CD4-positive, alpha-beta T cell (primary cell): ENCODE measurements at regions of chr1 and their contacts with region 1.

Region 1: GRCh38 chr1:25771246-25772114 is 28.5 kb upstream of the SELENON start:
- DNase-seq: peak; percentile 15 to 78 (median 58)
- ATAC-seq: peak; percentile 17
- H3K4me3 ChIP-seq: no peak overlapping the region
- H3K4me3 Mint-ChIP-seq: peak overlapping the region; percentile 77
- H3K27ac ChIP-seq: peak overlapping the region; percentile 12 to 72
- H3K27ac Mint-ChIP-seq: peak overlapping the region; percentile 98
- H3K4me1 ChIP-seq: peaks cover 82% of the 10 kb centered on the region
- H3K4me1 Mint-ChIP-seq: peaks cover 85% of the 10 kb centered on the region
- H3K27me3 ChIP-seq: no peaks in the 10 kb centered on the region
- H3K27me3 Mint-ChIP-seq: no peaks in the 10 kb centered on the region
- CTCF ChIP-seq: no peak

Region 2: DNA sequence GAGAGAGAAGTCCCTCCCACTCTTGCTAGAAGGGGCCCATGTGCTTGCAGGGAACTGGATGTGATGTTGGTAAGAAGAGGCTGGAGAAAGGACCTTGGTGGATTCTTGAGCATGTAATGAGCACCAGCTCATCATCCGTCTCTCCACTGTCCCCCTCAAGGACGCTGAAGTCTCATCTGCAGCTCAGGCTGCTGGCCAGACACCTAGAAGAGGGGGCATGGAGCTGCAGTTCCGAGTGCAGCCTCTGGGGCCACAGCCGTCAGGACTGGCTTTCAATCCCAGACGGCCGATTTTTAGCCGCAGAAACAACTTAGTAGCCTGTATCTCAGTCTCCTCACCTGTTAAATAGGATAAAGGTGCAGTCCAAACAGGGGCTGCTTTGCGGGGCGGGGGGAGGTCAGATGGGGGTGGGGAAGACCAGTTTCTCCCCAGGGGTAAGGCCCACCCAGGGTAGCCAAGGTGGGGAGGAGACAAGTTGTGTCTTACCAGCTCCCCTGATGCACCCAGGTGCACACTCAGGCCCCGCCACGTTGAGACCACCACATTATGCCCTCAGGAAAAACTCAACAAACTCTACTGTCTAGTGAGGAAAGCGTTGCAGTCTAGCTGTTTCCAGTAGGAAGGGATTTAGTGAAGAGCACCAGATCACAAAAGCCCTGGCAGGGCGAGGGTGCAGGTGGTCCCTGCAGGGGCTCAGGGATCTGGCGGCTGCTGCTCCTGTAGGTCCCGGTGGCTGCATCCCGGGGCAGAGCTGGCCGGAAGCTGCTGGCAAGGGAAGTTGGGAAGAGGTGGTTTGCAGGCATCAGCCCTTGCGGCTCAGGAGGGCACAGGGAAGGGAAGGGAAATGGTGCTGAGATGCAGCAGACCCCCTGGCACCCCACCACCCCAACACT is 198.5 kb before region 1 on chr1:
- CTCF ChIA-PET with region 1: interaction called, 7 read pairs
- POLR2A ChIA-PET with region 1: interaction called, 10 read pairs
- intact Hi-C with region 1: no loop called
- DNase-seq: peak in 13 of 14 experiments; percentile 31 to 73 (median 42)
- ATAC-seq: peak; percentile 82
- H3K4me3 ChIP-seq: no peak overlapping the region
- H3K4me3 Mint-ChIP-seq: no peak overlapping the region
- H3K27ac ChIP-seq: peak overlapping the region in 1 of 2 donors; percentile 8
- H3K27ac Mint-ChIP-seq: peak overlapping the region; percentile 87
- H3K4me1 ChIP-seq: peaks cover 58% of the 10 kb centered on the region
- H3K4me1 Mint-ChIP-seq: peaks cover 55% of the 10 kb centered on the region
- H3K27me3 ChIP-seq: no peaks in the 10 kb centered on the region
- H3K27me3 Mint-ChIP-seq: no peaks in the 10 kb centered on the region
- CTCF ChIP-seq: peak; percentile 73

Region 3: DNA sequence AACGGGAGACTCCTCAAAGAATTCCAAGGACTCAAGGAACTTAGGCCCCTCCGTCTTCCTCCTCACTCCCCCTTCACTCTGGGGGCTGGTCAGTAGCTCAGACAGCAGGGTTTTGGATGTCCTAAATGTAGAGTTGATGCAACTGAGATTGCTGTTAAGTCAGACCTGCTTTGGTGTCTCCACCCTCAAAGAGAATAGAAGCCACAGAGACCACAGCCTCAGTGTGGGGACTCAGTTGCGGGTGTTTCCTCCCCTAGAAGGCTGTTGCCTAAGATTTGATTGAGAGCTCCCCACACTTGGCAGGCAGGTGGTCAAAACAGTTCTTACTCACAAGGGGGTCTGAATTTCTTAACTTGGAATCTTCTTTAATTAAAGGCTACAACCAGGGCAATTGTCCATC is 147.3 kb before region 1 on chr1:
- CTCF ChIA-PET with region 1: interaction called, 10 read pairs
- POLR2A ChIA-PET with region 1: interaction called, 60 read pairs
- intact Hi-C with region 1: loop called in 1 of 2 experiments (anchors 2 kb)
- DNase-seq: peak in 4 of 14 experiments; percentile 23 to 61 (median 50)
- ATAC-seq: no peak
- H3K4me3 ChIP-seq: no peak overlapping the region
- H3K4me3 Mint-ChIP-seq: peak overlapping the region; percentile 100
- H3K27ac ChIP-seq: no peak overlapping the region
- H3K27ac Mint-ChIP-seq: peak overlapping the region; percentile 93
- H3K4me1 ChIP-seq: peaks cover 60% of the 10 kb centered on the region
- H3K4me1 Mint-ChIP-seq: peaks cover 93% of the 10 kb centered on the region
- H3K27me3 ChIP-seq: no peaks in the 10 kb centered on the region
- H3K27me3 Mint-ChIP-seq: no peaks in the 10 kb centered on the region
- CTCF ChIP-seq: no peak

Region 4: DNA sequence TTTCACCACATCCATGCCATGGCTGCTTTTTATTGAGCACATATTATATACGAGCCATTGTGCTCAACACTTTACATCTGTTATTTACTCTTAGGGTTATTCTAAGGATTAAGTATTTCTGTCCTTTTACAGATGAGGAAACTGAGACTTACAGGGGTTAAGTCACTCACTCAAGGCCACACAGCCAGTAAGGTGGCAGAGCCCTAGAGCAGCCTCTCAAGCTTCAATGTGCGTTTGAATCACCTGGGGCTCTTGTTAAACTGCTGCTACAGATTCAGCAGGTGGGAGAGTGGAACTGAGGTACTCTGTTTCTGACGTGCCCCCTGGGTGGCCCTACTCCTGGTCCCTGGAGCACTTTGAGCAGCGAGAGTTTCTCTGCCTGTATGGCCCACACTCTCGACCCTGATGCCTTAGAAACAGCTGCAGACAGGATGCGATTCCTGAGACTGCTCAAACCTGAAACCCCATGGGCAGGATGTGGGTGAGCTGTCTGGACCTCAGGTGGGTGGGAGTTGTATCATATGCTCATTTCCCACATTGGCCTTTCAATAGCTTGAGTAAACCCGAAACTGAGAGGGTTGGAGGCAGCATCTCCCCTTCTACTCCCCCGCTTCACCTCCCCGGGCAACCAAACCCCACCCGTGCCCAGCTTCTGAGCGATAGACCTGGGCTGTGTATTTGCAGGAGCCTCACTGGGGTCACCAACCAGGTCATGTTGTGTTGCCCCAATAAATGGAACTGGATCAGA is 95.6 kb before region 1 on chr1:
- CTCF ChIA-PET with region 1: interaction called, 4 read pairs
- POLR2A ChIA-PET with region 1: interaction called, 54 read pairs
- intact Hi-C with region 1: loop called in 1 of 2 experiments (anchors 1 kb)
- DNase-seq: peak; percentile 41 to 90 (median 66)
- ATAC-seq: peak; percentile 80
- H3K4me3 ChIP-seq: peak overlapping the region; percentile 37
- H3K4me3 Mint-ChIP-seq: peak overlapping the region; percentile 83
- H3K27ac ChIP-seq: peak overlapping the region; percentile 53 to 63
- H3K27ac Mint-ChIP-seq: peak overlapping the region; percentile 96
- H3K4me1 ChIP-seq: peaks cover 63% of the 10 kb centered on the region
- H3K4me1 Mint-ChIP-seq: peaks cover 94% of the 10 kb centered on the region
- H3K27me3 ChIP-seq: no peaks in the 10 kb centered on the region
- H3K27me3 Mint-ChIP-seq: no peaks in the 10 kb centered on the region
- CTCF ChIP-seq: no peak

Region 5: DNA sequence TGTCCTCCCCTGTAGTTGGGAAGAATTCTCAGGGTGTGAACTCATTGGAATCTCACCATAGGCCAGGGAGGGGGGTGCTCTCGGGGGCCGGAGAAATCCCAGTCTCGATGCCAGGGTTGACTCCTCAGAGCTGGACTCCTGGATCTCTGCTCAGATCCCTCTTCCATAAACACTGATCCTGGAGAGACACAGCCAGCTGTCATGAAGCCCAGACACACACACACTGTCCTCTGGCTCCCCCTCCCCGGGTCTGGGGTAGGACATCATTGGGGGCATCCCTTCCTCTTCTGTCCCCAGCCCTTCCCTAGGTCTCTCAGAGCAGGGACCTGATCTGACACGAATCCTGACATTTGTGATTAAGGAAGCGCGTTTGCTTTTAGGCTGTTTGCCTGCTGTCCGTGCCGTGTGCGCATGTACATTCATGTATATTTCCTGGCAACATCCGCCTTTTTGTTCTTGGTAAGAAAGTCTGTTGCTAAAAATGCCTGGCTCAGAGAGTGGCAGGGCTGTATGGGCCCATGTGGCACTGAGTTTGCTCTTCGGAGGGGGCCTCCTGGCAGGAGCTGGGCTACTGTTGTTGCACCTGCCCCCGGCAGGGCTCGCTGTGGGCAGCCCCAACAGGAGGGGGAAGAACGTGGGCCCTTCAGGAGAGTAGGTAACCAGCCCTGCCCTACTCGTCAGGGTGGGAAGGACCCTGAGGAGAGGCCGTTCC is 16.9 kb before region 1 on chr1:
- CTCF ChIA-PET with region 1: interaction called, 14 read pairs
- POLR2A ChIA-PET with region 1: interaction called, 38 read pairs
- intact Hi-C with region 1: loop called in 1 of 2 experiments (anchors 2 kb)
- DNase-seq: peak in 10 of 14 experiments; percentile 15 to 69 (median 48)
- ATAC-seq: peak; percentile 96
- H3K4me3 ChIP-seq: no peak overlapping the region
- H3K4me3 Mint-ChIP-seq: peak overlapping the region; percentile 44
- H3K27ac ChIP-seq: peak overlapping the region; percentile 17 to 63
- H3K27ac Mint-ChIP-seq: peak overlapping the region; percentile 99
- H3K4me1 ChIP-seq: peaks cover 45% of the 10 kb centered on the region
- H3K4me1 Mint-ChIP-seq: peaks cover 62% of the 10 kb centered on the region
- H3K27me3 ChIP-seq: no peaks in the 10 kb centered on the region
- H3K27me3 Mint-ChIP-seq: no peaks in the 10 kb centered on the region
- CTCF ChIP-seq: peak; percentile 15

Region 6: GRCh38 chr1:25810341-25811299 is 39.1 kb after region 1 on chr1:
- CTCF ChIA-PET with region 1: interaction called, 3 read pairs
- POLR2A ChIA-PET with region 1: interaction called, 16 read pairs
- intact Hi-C with region 1: no loop called
- DNase-seq: peak; percentile 70 to 89 (median 80)
- ATAC-seq: peak; percentile 99
- H3K4me3 ChIP-seq: no peak overlapping the region
- H3K4me3 Mint-ChIP-seq: no peak overlapping the region
- H3K27ac ChIP-seq: no peak overlapping the region
- H3K27ac Mint-ChIP-seq: no peak overlapping the region
- H3K4me1 ChIP-seq: peaks cover 13% of the 10 kb centered on the region
- H3K4me1 Mint-ChIP-seq: peaks cover 5% of the 10 kb centered on the region
- H3K27me3 ChIP-seq: no peaks in the 10 kb centered on the region
- H3K27me3 Mint-ChIP-seq: no peaks in the 10 kb centered on the region
- CTCF ChIP-seq: peak; percentile 96